ENCODE measurements at regions of chr16 and their contacts with region 1.

Region 1: DNA sequence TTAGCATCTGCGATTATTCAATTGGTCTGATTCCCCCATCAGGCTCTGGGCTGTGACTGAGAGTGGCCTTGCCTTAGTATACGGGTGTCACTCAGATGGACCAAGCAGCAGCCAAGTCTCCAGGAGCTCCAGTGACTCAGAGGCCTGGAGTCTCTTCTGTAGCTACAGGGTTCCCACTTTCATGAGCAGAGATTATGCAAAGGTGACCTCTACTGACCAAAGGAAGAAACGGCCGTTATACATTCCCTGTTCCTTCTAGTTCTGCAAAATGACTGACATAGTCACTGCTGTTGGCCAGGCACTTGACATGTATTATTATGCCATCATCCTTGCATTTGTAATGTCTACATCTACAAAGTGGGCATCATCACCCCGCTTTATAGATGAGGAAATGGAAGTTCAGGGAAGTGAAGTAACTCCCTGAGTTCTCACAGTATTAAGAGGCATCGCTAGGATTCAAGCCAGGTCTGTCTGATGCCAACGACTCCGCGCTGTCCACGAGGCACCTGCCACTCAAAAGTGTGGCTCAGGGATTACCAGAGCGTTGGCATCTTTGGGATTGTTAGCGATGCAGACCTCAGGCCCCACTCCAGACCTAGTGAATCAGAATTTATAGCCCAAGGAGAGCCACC is 23.3 kb downstream of the SLC38A7 start:
- DNase-seq: peak; percentile 81
- H3K4me3 ChIP-seq: no peak overlapping the region
- H3K27ac ChIP-seq: no peak overlapping the region
- H3K4me1 ChIP-seq: no peaks in the 10 kb centered on the region
- H3K27me3 ChIP-seq: no peaks in the 10 kb centered on the region
- CTCF ChIP-seq: peak; percentile 70 to 76

Region 2: GRCh38 chr16:58494981-58495520 is 166.3 kb before region 1 on chr16:
- CTCF ChIA-PET with region 1: interaction called, 6 read pairs
- dilution Hi-C with region 1: no loop called
- in situ Hi-C with region 1: no loop called
- intact Hi-C with region 1: loop called (anchors 1 kb)
- DNase-seq: peak; percentile 96
- H3K4me3 ChIP-seq: no peak overlapping the region
- H3K27ac ChIP-seq: no peak overlapping the region
- H3K4me1 ChIP-seq: no peaks in the 10 kb centered on the region
- H3K27me3 ChIP-seq: no peaks in the 10 kb centered on the region
- CTCF ChIP-seq: peak; percentile 42 to 52

Region 3: GRCh38 chr16:58515125-58515870 is 146.0 kb before region 1 on chr16 and contains the start of gene SETD6:
- CTCF ChIA-PET with region 1: interaction called, 8 read pairs
- dilution Hi-C with region 1: no loop called
- in situ Hi-C with region 1: no loop called
- intact Hi-C with region 1: loop called (anchors 1 kb)
- DNase-seq: peak; percentile 77
- H3K4me3 ChIP-seq: peak within 1 kb of the TSS; percentile 49 to 84 (median 65)
- H3K27ac ChIP-seq: peak within 1 kb of the TSS; percentile 2
- H3K4me1 ChIP-seq: peaks cover 17% of the 10 kb centered on the region
- H3K27me3 ChIP-seq: no peaks in the 10 kb centered on the region
- CTCF ChIP-seq: peak in 1 of 2 donors; percentile 35
- total RNA-seq, gene SETD6: 12.5 to 14.4 TPM

Region 4: DNA sequence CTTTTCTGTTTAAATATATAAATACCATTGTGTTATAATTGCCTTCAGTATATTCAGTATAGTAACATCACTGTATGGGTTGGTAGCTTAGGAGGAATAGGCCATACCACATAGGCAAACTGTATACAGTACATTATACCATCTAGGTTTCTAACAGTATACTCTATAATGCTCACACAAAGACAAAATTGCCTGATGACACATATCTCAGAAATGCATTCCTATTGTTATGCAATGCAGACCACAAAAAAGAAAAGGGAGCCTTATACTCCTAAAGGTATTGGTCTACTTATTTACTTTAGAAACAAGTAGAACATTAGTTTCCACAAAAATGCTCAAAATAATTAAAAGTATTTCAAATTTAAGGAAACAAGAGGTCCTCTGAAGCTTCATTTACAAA is 98.1 kb before region 1 on chr16:
- CTCF ChIA-PET with region 1: no interaction called
- dilution Hi-C with region 1: no loop called
- in situ Hi-C with region 1: loop called in 1 of 2 experiments (anchors 25 kb)
- intact Hi-C with region 1: no loop called
- DNase-seq: peak; percentile 65
- H3K4me3 ChIP-seq: no peak overlapping the region
- H3K27ac ChIP-seq: no peak overlapping the region
- H3K4me1 ChIP-seq: peaks cover 10% of the 10 kb centered on the region
- H3K27me3 ChIP-seq: no peaks in the 10 kb centered on the region
- CTCF ChIP-seq: no peak

Region 5: GRCh38 chr16:58755989-58756649 is 94.8 kb after region 1 on chr16:
- CTCF ChIA-PET with region 1: interaction called, 4 read pairs
- dilution Hi-C with region 1: no loop called
- in situ Hi-C with region 1: loop called in 1 of 2 experiments (anchors 25 kb)
- intact Hi-C with region 1: loop called (anchors 5 kb)
- DNase-seq: peak; percentile 58
- H3K4me3 ChIP-seq: no peak overlapping the region
- H3K27ac ChIP-seq: no peak overlapping the region
- H3K4me1 ChIP-seq: no peaks in the 10 kb centered on the region
- H3K27me3 ChIP-seq: no peaks in the 10 kb centered on the region
- CTCF ChIP-seq: peak; percentile 70 to 91